ENCODE measurements at regions of chr22 and their contacts with region 1.

Region 1: DNA sequence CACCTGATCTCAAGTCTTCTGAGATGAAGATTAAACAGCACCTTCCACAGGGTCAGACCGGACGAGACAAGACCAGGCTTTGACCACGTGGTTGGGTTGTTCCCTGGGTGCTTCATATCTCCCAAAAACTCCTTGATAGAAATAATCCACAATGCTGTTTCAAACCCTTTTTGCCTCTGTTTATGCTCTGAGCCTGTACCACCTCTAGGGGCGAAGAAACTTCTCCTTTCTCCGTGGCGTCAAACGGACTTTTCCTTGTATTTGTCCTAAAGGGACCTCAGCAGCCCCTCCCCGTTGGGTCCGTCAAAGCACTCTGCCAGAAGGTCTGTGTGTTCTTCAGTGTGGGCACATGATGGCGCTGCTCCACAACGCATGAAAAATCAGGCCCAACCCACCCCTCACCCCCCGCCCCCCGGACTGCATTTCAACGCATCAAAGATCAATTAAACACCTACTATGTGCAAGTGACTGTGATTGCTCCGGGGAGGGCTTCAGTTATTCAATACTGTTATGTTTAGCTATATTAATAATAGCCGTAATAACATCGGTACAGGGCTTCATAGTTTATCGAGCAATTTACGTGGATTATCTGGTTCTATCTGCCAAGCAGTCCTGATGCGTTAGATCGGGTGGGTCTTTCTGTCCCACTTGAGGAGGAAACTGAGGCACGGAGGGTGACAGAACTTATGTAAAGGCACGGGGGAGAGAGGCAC is 17.3 kb upstream of the EIF3D start:
- DNase-seq: no peak
- ATAC-seq: peak; percentile 67
- H3K4me3 ChIP-seq: peak overlapping the region; percentile 11 to 50; a peak in 3 of 4 replicates
- H3K27ac ChIP-seq: peak overlapping the region; percentile 81
- H3K4me1 ChIP-seq: peaks cover 35% of the 10 kb centered on the region
- H3K27me3 ChIP-seq: no peaks in the 10 kb centered on the region
- CTCF ChIP-seq: peak; percentile 82

Region 2: DNA sequence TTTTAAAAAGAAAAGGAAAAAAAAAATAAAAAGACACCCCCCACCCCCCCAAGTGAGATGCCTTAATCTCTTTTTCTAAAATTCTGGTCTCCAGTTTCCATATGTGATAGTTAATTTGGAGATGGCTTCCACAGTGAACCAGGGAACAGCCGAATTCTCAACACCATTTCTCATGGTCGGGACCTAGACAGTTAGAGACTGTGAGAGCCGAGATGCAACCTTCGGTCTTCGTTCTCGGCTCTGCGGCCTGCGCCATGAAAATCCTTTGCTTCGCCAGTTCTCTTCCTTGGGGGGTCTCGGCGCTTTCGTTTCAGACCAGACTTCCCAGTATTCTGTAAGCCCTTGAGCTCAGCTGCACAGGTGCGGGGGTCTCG is 156.6 kb after region 1 on chr22:
- CTCF ChIA-PET with region 1: no interaction called
- POLR2A ChIA-PET with region 1: no interaction called
- in situ Hi-C with region 1: no loop called
- intact Hi-C with region 1: no loop called
- DNase-seq: no peak
- ATAC-seq: 0 out of 2 replicates have a peak, but pooled peaks have one; percentile 33
- H3K4me3 ChIP-seq: peak overlapping the region; percentile 27 to 30
- H3K27ac ChIP-seq: no peak overlapping the region
- H3K4me1 ChIP-seq: peaks cover 5% of the 10 kb centered on the region; the same call in 1 of the 2 replicates
- H3K27me3 ChIP-seq: peaks cover 4% of the 10 kb centered on the region
- CTCF ChIP-seq: no peak

Region 3: GRCh38 chr22:36775964-36776669 is 229.9 kb after region 1 on chr22 and contains the start of gene IFT27:
- CTCF ChIA-PET with region 1: interaction called, 8 read pairs
- POLR2A ChIA-PET with region 1: interaction called, 3 read pairs
- in situ Hi-C with region 1: no loop called
- intact Hi-C with region 1: loop called (anchors 2 kb)
- DNase-seq: peak; percentile 99
- ATAC-seq: peak; percentile 98
- H3K4me3 ChIP-seq: peak within 1 kb of the TSS; percentile 74 to 76
- H3K27ac ChIP-seq: peak within 1 kb of the TSS; percentile 85
- H3K4me1 ChIP-seq: peaks cover 13% of the 10 kb centered on the region
- H3K27me3 ChIP-seq: no peaks in the 10 kb centered on the region
- CTCF ChIP-seq: no peak
- total RNA-seq, gene IFT27: 44.4 TPM

Region 4: DNA sequence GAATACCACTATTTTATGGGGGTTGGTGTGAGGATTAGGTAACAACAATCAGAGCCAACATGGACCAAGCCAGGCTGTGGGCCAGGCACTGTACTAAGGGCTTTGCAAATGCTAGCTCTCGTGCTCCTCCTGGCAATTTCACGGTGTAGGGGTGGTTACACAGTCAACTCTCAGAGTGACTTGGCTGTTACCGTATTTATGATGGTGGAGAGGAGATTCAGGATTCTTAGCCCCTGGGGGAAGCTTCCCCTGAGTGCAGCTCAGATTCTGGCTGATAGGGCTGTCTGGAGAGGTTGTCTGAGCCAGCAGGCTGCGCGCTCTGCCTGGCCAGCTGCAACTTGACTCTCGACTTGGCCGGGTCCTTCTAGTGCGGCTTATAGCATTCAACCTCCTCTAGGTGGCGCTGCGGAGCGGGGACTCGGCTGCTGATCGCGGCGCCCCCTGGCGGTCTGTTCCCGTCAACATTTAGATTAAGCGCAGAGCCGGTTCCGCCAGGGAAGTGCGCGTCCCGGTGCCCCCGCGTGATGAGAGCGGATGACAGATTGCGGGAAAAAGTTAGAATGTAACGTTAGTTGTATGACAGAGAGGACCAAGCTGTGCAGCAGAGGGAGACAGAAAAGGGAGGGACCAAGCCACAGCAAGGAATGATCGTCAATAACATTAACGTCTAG is 310.0 kb after region 1 on chr22:
- CTCF ChIA-PET with region 1: interaction called, 5 read pairs
- POLR2A ChIA-PET with region 1: no interaction called
- in situ Hi-C with region 1: no loop called
- intact Hi-C with region 1: loop called (anchors 2 kb)
- DNase-seq: peak; percentile 64
- ATAC-seq: peak; percentile 95
- H3K4me3 ChIP-seq: 0 out of 4 replicates have a peak overlapping the region, but pooled peaks of 1 of the 2 experiments have one; percentile 18
- H3K27ac ChIP-seq: no peak overlapping the region
- H3K4me1 ChIP-seq: no peaks in the 10 kb centered on the region
- H3K27me3 ChIP-seq: no peaks in the 10 kb centered on the region
- CTCF ChIP-seq: peak; percentile 99

Measured in Panc1 (cell line).